RWPE1 (cell line): ENCODE measurements at regions of chr3 and their contacts with region 1.

Region 1: DNA sequence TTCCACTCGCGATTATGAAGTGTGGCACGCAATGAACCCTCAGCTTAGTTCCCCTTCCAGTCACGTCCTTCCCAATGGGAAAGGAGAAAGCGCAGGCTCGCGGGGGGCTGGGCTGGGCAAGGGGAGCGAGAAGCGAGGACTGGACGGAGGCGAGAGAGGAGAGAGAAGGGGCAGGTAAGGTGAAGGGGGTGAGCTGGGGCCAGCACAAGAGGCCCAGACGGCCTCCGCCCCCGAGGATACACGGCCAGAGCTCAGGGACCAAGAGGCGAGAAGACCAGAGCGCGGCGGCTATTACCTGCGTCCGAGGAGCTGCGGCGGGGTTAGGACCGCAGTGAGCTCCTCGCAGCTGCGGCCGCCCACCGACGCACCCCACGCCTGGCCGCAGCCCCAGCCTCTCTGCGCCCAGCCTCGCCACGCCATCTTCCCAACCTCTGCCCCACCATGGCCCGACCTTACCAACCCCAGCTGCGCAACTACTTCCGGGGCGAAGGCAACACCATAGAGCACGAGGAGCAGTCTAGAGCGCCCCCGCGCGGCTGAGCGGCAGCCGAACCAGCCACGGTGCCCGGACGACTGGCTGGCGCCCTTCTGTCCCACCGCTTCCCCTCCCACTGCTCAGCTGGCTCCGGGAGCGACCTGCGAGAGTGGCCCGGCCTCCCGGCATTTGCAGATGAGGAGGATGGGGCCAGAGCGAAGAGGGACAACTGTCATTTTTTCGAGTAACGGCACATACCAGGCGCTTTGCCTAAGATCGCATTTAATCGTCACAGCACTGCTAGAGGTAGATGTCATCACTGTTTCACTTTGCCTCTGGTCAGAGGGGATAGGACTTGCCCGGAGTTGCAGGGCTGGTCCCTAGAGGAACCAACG is at the start of gene PARL:
- DNase-seq: peak; percentile 88
- H3K27ac ChIP-seq: peak within 1 kb of the TSS; percentile 75
- CTCF ChIP-seq: peak; percentile 95

Region 2: GRCh38 chr3:183895296-183895695 is 10.6 kb after region 1 on chr3:
- CTCF ChIA-PET with region 1: interaction called, 18 read pairs
- POLR2A ChIA-PET with region 1: no interaction called
- DNase-seq: peak; percentile 79
- H3K27ac ChIP-seq: no peak overlapping the region
- CTCF ChIP-seq: peak; percentile 85